ENCODE measurements at regions of chr16 and their contacts with region 1.

Region 1: DNA sequence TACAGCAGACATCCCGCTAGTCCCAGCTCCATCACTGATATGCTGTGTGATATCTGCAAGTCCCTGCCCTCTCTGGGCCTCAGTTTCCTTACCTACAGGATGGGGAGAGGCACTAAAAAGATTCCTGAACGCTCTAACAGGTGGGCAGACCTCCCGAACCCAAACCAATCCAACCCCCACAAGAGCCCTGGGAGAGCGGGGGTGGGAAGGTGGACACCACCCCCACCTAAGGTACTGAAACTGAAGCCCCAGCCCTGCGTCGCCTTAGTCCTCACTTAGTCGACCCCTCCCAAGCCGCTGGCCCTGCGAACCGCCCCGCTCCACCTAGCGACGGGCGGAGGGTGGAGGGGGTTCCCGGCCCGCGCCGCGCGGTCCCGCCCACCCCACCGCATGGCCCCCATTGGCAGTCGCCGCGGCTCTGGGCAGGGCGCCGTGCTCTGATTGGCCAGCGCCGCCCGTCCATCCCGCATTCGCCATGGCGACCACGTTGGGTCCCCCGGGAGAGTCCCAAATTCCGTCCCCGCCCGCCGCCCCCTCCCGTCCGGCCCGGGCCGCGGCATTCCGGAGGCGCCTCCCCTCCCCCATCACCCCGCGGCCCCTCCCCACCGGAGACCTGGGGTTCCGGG is 578 bp downstream of the CCDC102A start:
- DNase-seq: peak; percentile 98
- H3K4me3 Mint-ChIP-seq: peak overlapping the region; percentile 86
- H3K27ac Mint-ChIP-seq: peak overlapping the region; percentile 89
- H3K4me1 Mint-ChIP-seq: peaks cover 63% of the 10 kb centered on the region
- H3K27me3 Mint-ChIP-seq: no peaks in the 10 kb centered on the region

Region 2: GRCh38 chr16:57485916-57486857 is 49.6 kb before region 1 on chr16 and contains the start of gene DOK4:
- intact Hi-C with region 1: loop called (anchors 2 kb)
- DNase-seq: peak; percentile 94
- H3K4me3 Mint-ChIP-seq: peak within 1 kb of the TSS; percentile 82
- H3K27ac Mint-ChIP-seq: peak within 1 kb of the TSS; percentile 76
- H3K4me1 Mint-ChIP-seq: peaks cover 12% of the 10 kb centered on the region
- H3K27me3 Mint-ChIP-seq: no peaks in the 10 kb centered on the region
- total RNA-seq, gene DOK4: 4.2 and 4.3 TPM in 2 replicates

Region 3: GRCh38 chr16:57564571-57565270 is 28.9 kb after region 1 on chr16:
- intact Hi-C with region 1: no loop called
- DNase-seq: no peak
- H3K4me3 Mint-ChIP-seq: no peak overlapping the region
- H3K27ac Mint-ChIP-seq: no peak overlapping the region
- H3K4me1 Mint-ChIP-seq: peaks cover 2% of the 10 kb centered on the region
- H3K27me3 Mint-ChIP-seq: no peaks in the 10 kb centered on the region

Region 4: DNA sequence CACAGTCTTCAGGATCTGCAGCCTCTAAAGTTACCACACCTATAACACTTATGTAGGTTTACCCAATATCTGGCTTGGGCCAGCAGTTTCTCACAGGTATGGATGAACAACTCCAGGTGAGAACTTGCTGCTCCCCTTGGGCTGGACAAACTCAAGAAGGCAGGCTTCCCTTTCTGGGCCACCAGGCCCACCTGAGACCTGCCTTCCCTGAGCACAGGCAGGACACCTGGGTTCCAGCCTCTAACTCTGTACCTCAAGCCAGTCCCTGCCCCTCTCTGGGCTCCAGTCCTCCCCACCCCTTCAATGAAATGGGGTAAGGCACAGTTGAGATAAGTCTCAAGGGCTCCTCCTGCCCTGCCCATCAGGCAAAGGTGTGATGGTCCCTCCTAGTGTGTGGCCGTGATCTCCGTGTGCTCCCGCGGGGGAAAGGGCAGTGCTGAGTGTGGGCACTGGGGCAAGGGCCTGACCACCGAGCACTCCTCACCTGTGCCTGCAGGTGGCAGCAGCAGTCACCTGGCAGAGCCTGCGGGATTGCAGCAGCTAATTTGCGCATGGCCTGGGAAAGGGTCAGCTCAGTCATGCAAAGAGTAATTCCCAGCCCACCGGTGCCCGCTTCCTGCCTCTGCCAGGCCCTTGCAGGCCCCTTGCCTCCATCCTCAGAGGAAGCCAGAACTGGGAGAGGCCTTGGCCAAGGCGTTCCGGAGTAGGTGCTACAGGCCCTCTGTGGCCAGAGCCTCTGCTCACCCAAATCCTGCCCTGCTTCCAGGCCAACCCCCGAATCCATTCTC is 64.4 kb after region 1 on chr16:
- intact Hi-C with region 1: loop called (anchors 2 kb)
- DNase-seq: peak; percentile 80
- H3K4me3 Mint-ChIP-seq: no peak overlapping the region
- H3K27ac Mint-ChIP-seq: peak overlapping the region; percentile 95
- H3K4me1 Mint-ChIP-seq: peaks cover 41% of the 10 kb centered on the region
- H3K27me3 Mint-ChIP-seq: peaks cover 3% of the 10 kb centered on the region

Region 5: DNA sequence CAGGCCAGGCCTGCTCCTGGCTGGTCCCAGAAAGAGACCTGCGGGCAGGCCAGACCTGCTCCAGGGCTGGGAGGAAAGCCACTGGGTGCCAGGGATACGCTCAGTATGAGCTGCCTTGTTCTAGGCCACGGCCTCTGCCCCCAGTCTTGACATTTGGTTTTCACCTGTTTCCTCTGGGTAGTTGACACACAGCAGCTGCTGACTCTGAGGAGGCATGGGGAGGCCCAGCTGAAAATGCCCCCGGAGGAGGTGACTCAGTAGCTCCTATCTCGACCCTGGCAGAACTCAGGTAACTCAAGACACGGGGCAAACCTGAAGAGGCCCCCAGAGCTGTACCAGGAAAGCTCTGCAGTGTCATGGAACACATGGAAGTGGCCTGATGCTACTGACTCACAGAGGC is 78.7 kb after region 1 on chr16:
- intact Hi-C with region 1: no loop called
- DNase-seq: peak; percentile 64
- H3K4me3 Mint-ChIP-seq: no peak overlapping the region
- H3K27ac Mint-ChIP-seq: peak overlapping the region; percentile 84
- H3K4me1 Mint-ChIP-seq: peaks cover 29% of the 10 kb centered on the region
- H3K27me3 Mint-ChIP-seq: no peaks in the 10 kb centered on the region

Measured in activated CD4-positive, alpha-beta T cell treated with anti-CD3 and anti-CD28 coated beads, Interleukin-2, amount 10 ng/mL, durations not matched to agents 24 days and 14 days (primary cell).